Ascending aorta (tissue), 2 donors: ENCODE measurements at regions of chr4 and their contacts with region 1.

Region 1: DNA sequence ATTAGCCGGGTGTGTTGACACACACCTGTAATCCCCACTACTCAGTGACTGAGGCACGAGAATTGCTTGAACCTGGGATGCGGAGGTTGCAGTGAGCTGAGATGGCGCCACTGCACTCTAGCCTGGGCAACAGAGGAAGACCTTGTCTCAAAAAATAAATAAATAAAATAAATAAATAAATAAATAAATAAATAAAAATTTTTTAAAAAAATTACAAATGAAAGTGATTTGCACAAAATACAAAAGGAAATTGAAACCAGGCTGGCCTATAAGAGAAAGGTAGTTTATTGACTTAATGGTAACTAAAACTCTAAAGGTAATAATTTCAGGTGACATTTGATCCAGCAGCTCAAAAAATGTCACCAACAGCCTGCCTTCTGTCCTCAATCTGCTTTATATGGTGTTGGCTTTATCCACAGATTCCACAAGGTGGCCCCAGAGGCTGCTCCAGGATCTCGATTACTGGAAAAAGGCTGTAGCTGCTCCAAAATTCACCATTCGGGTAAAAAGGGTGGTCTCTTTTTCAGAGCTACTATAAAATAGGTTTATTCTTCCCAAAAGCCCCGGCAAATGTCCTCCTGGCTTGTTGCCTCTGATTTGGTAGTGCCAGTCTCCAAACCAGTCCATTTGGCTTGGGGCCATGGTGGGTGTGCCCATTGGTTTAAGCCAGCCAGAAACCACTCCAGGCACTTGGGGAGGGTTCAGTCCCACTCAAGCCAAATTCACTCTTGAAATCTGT is 61.4 kb upstream of the TRIM2 start:
- DNase-seq: peak in 1 of 2 donors; percentile 82
- H3K4me3 ChIP-seq: peak overlapping the region in 1 of 2 donors; percentile 40
- H3K27ac ChIP-seq: no peak overlapping the region
- H3K4me1 ChIP-seq: no peaks in the 10 kb centered on the region
- H3K27me3 ChIP-seq: no peaks in the 10 kb centered on the region
- CTCF ChIP-seq: peak; percentile 71 to 89 (median 81)

Region 2: GRCh38 chr4:153573881-153574802 is 431.3 kb after region 1 on chr4:
- intact Hi-C with region 1: loop called (anchors 2 kb)
- DNase-seq: peak in 1 of 2 donors; percentile 83
- H3K4me3 ChIP-seq: no peak overlapping the region
- H3K27ac ChIP-seq: no peak overlapping the region
- H3K4me1 ChIP-seq: peaks cover 3 to 10% of the 10 kb centered on the region in 2 donors
- H3K27me3 ChIP-seq: no peaks in the 10 kb centered on the region
- CTCF ChIP-seq: peak; percentile 63 to 79 (median 63)